CD4-positive, alpha-beta T cell (primary cell): ENCODE measurements at regions of chr17 and their contacts with region 1.

Region 1: DNA sequence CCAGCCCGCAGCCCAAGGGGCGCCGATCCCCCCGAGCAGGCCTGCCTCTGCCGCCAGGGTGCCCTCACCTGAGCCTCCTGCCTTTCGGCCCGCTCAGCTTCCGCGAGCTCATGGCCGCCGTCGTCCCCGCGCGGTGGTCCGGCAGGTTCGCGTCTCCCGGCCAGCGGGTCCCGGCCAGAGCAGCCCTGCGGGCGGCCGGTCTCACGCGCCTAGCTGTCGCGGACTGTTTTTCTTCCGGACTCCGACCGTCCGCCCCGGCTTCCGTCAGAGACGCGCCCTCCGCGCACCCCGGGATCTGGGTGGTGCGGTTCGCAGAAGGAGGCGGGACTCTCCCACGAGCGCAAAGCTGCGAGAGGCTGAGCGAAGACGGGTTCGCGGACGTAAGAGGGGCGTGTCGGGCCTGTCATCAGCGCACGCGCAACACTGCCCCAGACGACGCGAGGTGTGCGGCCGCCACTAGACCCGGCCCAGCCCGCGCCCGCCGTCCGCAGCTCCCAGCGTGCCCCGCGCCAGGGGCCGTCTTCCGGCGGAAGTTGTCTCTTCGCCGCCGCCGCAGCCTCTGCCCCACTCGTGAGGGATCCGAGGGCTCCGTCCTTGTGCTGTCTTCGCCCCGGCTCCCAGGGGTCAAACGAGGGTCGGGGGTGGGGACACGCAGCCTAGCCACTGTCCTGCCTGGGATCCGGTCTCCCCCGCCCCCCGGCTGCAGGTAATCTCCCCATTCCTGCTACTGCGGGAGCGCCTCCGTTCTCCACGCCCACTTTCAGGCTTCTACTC is at the start of gene INPP5K:
- DNase-seq: peak; percentile 94 to 100 (median 97)
- ATAC-seq: peak; percentile 92
- H3K4me3 ChIP-seq: peak within 1 kb of the TSS; percentile 98
- H3K4me3 Mint-ChIP-seq: peak within 1 kb of the TSS; percentile 94
- H3K27ac ChIP-seq: peak within 1 kb of the TSS; percentile 88 to 93
- H3K27ac Mint-ChIP-seq: peak within 1 kb of the TSS; percentile 92
- H3K4me1 ChIP-seq: peaks cover 39% of the 10 kb centered on the region
- H3K4me1 Mint-ChIP-seq: peaks cover 26% of the 10 kb centered on the region
- H3K27me3 ChIP-seq: no peaks in the 10 kb centered on the region
- H3K27me3 Mint-ChIP-seq: no peaks in the 10 kb centered on the region
- CTCF ChIP-seq: no peak
- total RNA-seq, gene INPP5K: 199 to 207 TPM

Region 2: GRCh38 chr17:1399679-1400512 is 116.7 kb before region 1 on chr17 and contains the start of gene YWHAE:
- CTCF ChIA-PET with region 1: interaction called, 6 read pairs
- POLR2A ChIA-PET with region 1: interaction called, 24 read pairs
- intact Hi-C with region 1: no loop called
- DNase-seq: peak; percentile 92 to 97 (median 96)
- ATAC-seq: peak; percentile 86
- H3K4me3 ChIP-seq: peak within 1 kb of the TSS; percentile 95
- H3K4me3 Mint-ChIP-seq: peak within 1 kb of the TSS; percentile 100
- H3K27ac ChIP-seq: peak within 1 kb of the TSS; percentile 93 to 96
- H3K27ac Mint-ChIP-seq: peak within 1 kb of the TSS; percentile 98
- H3K4me1 ChIP-seq: peaks cover 39% of the 10 kb centered on the region
- H3K4me1 Mint-ChIP-seq: peaks cover 37% of the 10 kb centered on the region
- H3K27me3 ChIP-seq: no peaks in the 10 kb centered on the region
- H3K27me3 Mint-ChIP-seq: no peaks in the 10 kb centered on the region
- CTCF ChIP-seq: no peak
- total RNA-seq, gene YWHAE: 116 to 133 TPM

Region 3: GRCh38 chr17:1462287-1463112 is 54.1 kb before region 1 on chr17:
- CTCF ChIA-PET with region 1: interaction called, 10 read pairs
- POLR2A ChIA-PET with region 1: interaction called, 19 read pairs
- intact Hi-C with region 1: no loop called
- DNase-seq: no peak
- ATAC-seq: no peak
- H3K4me3 ChIP-seq: peak overlapping the region; percentile 7
- H3K4me3 Mint-ChIP-seq: peak overlapping the region; percentile 43
- H3K27ac ChIP-seq: no peak overlapping the region
- H3K27ac Mint-ChIP-seq: peak overlapping the region; percentile 71
- H3K4me1 ChIP-seq: peaks cover 42% of the 10 kb centered on the region
- H3K4me1 Mint-ChIP-seq: peaks cover 32% of the 10 kb centered on the region
- H3K27me3 ChIP-seq: no peaks in the 10 kb centered on the region
- H3K27me3 Mint-ChIP-seq: no peaks in the 10 kb centered on the region
- CTCF ChIP-seq: no peak

Region 4: GRCh38 chr17:1532836-1533602 is 16.4 kb after region 1 on chr17:
- CTCF ChIA-PET with region 1: interaction called, 12 read pairs
- POLR2A ChIA-PET with region 1: interaction called, 19 read pairs
- intact Hi-C with region 1: no loop called
- DNase-seq: peak in 13 of 14 experiments; percentile 29 to 78 (median 48)
- ATAC-seq: peak; percentile 97
- H3K4me3 ChIP-seq: no peak overlapping the region
- H3K4me3 Mint-ChIP-seq: no peak overlapping the region
- H3K27ac ChIP-seq: peak overlapping the region in 1 of 2 donors; percentile 0
- H3K27ac Mint-ChIP-seq: no peak overlapping the region
- H3K4me1 ChIP-seq: no peaks in the 10 kb centered on the region
- H3K4me1 Mint-ChIP-seq: no peaks in the 10 kb centered on the region
- H3K27me3 ChIP-seq: no peaks in the 10 kb centered on the region
- H3K27me3 Mint-ChIP-seq: no peaks in the 10 kb centered on the region
- CTCF ChIP-seq: peak; percentile 17

Region 5: DNA sequence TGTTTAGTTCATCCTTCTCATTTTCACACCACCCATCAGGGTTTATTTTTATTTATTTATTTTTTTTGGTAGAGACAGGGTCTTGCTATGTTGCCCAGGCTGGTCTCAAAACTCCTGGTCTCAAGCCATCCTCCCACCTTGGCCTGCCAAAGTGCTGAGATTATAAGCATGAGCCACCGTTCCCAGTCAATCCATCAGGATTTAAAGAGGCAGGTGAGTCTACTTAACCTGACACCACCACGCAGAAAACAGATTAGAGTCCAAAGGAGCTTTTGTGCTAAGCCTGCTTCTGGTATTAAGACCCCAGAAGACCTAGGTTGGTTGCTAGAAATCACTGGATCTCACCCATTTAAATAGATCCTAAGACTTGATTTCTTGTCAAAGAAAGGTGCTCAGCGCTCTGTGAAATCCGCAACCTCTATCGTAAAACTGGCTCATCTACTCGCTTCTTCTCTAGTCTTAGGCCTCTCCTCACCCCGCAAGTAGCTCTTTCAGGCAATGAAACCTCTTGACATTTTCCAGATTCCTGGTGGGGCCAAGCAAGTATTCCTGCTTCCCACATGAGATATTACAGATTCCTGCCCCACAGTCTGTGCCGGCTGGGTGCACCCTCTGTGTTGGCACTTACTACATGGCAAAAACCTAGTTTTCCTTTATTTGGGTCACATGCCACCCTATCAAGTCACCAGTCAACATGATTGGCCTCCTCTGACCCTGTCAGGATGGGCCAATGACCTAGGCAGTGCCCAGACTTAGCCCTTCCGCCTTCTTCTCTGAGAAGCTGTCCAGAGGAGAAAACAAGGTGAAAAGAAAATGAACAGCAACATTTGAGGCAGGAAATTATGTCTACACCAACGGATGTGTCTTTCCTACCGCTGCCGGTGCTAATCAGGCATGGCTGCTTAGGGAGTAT is 37.0 kb after region 1 on chr17:
- CTCF ChIA-PET with region 1: no interaction called
- POLR2A ChIA-PET with region 1: no interaction called
- intact Hi-C with region 1: no loop called
- DNase-seq: no peak
- ATAC-seq: no peak
- H3K4me3 ChIP-seq: no peak overlapping the region
- H3K4me3 Mint-ChIP-seq: no peak overlapping the region
- H3K27ac ChIP-seq: no peak overlapping the region
- H3K27ac Mint-ChIP-seq: no peak overlapping the region
- H3K4me1 ChIP-seq: no peaks in the 10 kb centered on the region
- H3K4me1 Mint-ChIP-seq: peaks cover 7% of the 10 kb centered on the region
- H3K27me3 ChIP-seq: no peaks in the 10 kb centered on the region
- H3K27me3 Mint-ChIP-seq: no peaks in the 10 kb centered on the region
- CTCF ChIP-seq: no peak

Region 6: GRCh38 chr17:1590031-1590748 is 73.6 kb after region 1 on chr17:
- CTCF ChIA-PET with region 1: no interaction called
- POLR2A ChIA-PET with region 1: no interaction called
- intact Hi-C with region 1: no loop called
- DNase-seq: peak in 2 of 14 experiments; percentile 57 to 67
- ATAC-seq: no peak
- H3K4me3 ChIP-seq: no peak overlapping the region
- H3K4me3 Mint-ChIP-seq: no peak overlapping the region
- H3K27ac ChIP-seq: no peak overlapping the region
- H3K27ac Mint-ChIP-seq: no peak overlapping the region
- H3K4me1 ChIP-seq: peaks cover 4% of the 10 kb centered on the region
- H3K4me1 Mint-ChIP-seq: no peaks in the 10 kb centered on the region
- H3K27me3 ChIP-seq: no peaks in the 10 kb centered on the region
- H3K27me3 Mint-ChIP-seq: no peaks in the 10 kb centered on the region
- CTCF ChIP-seq: no peak

Region 7: GRCh38 chr17:1617620-1618174 is 101.1 kb after region 1 on chr17:
- CTCF ChIA-PET with region 1: no interaction called
- POLR2A ChIA-PET with region 1: no interaction called
- intact Hi-C with region 1: no loop called
- DNase-seq: no peak
- ATAC-seq: no peak
- H3K4me3 ChIP-seq: no peak overlapping the region
- H3K4me3 Mint-ChIP-seq: no peak overlapping the region
- H3K27ac ChIP-seq: no peak overlapping the region
- H3K27ac Mint-ChIP-seq: no peak overlapping the region
- H3K4me1 ChIP-seq: peaks cover 7% of the 10 kb centered on the region
- H3K4me1 Mint-ChIP-seq: no peaks in the 10 kb centered on the region
- H3K27me3 ChIP-seq: no peaks in the 10 kb centered on the region
- H3K27me3 Mint-ChIP-seq: no peaks in the 10 kb centered on the region
- CTCF ChIP-seq: no peak

Region 8: DNA sequence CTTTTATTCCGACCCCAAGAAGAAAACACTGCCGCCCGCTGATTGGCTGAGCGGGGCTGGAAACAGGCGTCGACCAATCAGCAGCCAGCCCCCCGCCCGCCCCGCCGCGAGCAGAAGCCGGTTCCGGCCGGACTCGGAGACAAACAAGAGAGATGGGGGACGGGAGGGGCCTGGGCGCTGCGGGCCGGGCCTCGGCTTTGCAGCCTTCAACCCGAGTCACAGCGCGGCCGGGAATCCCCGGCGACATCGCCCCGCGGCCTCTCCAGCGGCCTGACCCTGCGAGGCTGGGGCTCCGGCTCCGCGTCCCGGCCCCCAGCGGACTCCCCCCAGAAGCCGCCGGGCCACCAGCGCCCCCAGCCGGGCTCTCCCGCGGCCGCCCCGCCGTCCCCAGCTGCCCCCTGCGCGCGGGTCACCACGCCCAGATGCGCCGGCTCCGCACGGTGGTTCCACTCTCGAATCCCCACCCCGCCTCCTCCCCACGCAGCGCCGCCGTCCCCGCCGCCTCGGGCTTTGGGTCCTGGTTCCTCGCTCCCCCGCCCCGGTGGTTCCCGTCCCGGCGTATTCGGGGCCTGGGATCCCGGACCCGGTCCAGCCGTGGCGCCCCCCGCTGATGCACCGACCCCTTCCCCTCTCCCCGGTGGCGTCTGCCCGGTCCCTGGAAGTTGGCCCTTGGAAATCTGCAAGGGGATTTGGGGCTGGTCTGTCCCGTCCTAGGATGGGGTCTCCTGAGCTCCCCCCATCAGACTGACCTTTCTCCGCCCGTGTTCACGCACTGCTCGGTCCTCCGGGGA is 112.5 kb after region 1 on chr17:
- CTCF ChIA-PET with region 1: interaction called, 10 read pairs
- POLR2A ChIA-PET with region 1: interaction called, 23 read pairs
- intact Hi-C with region 1: loop called in 1 of 2 experiments (anchors 2 kb)
- DNase-seq: peak; percentile 76 to 94 (median 87)
- ATAC-seq: peak; percentile 75
- H3K4me3 ChIP-seq: peak overlapping the region; percentile 76
- H3K4me3 Mint-ChIP-seq: peak overlapping the region; percentile 96
- H3K27ac ChIP-seq: peak overlapping the region in 1 of 2 donors; percentile 46
- H3K27ac Mint-ChIP-seq: peak overlapping the region; percentile 77
- H3K4me1 ChIP-seq: peaks cover 34% of the 10 kb centered on the region
- H3K4me1 Mint-ChIP-seq: peaks cover 23% of the 10 kb centered on the region
- H3K27me3 ChIP-seq: peaks cover 0 to 5% of the 10 kb centered on the region in 2 experiments
- H3K27me3 Mint-ChIP-seq: no peaks in the 10 kb centered on the region
- CTCF ChIP-seq: no peak